K562 (cell line): ENCODE measurements at regions of chrX and their contacts with region 1.

Region 1: GRCh38 chrX:49147936-49148335 is 14.6 kb upstream of the MAGIX start:
- DNase-seq: peak in 2 of 4 experiments; percentile 16 to 41
- ATAC-seq: peak; percentile 55
- H3K4me3 ChIP-seq: peak overlapping the region; percentile 54
- H3K27ac ChIP-seq: peak overlapping the region; percentile 98
- H3K4me1 ChIP-seq: peaks cover 5 to 9% of the 10 kb centered on the region in 2 experiments; a peak in 3 of 5 replicates
- H3K27me3 ChIP-seq: no peaks in the 10 kb centered on the region
- CTCF ChIP-seq: no peak
- EP300 ChIP-seq: no peak
- POLR2A ChIP-seq: no peak
- RAD21 ChIP-seq: no peak

Region 2: DNA sequence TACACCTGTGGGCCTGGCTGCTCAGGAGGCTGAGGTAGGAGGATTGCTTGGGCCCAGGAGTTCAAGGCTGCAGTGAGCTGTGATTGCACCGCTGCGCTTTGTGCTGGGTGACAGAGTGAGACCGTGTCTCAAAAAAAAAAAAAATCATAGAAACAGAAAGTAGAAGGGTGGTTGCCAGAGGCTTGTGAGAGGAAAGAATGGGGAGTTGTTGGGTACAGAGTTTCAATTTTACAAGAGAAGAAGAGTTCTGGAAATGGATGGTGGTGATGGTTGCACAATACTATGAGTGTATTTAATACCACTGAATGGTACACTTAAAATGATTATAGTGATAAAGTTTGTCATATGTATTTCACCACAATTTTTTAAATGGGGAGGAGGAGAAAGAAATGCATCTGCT is 396.6 kb before region 1 on chrX:
- CTCF ChIA-PET with region 1: no interaction called
- POLR2A ChIA-PET with region 1: no interaction called
- in situ Hi-C with region 1: no loop called
- intact Hi-C with region 1: no loop called
- DNase-seq: no peak
- ATAC-seq: no peak
- H3K4me3 ChIP-seq: no peak overlapping the region
- H3K27ac ChIP-seq: no peak overlapping the region
- H3K4me1 ChIP-seq: peaks cover 3 to 8% of the 10 kb centered on the region in 2 experiments; a peak in 3 of 5 replicates
- H3K27me3 ChIP-seq: no peaks in the 10 kb centered on the region
- CTCF ChIP-seq: no peak
- EP300 ChIP-seq: no peak
- POLR2A ChIP-seq: no peak
- RAD21 ChIP-seq: no peak

Region 3: DNA sequence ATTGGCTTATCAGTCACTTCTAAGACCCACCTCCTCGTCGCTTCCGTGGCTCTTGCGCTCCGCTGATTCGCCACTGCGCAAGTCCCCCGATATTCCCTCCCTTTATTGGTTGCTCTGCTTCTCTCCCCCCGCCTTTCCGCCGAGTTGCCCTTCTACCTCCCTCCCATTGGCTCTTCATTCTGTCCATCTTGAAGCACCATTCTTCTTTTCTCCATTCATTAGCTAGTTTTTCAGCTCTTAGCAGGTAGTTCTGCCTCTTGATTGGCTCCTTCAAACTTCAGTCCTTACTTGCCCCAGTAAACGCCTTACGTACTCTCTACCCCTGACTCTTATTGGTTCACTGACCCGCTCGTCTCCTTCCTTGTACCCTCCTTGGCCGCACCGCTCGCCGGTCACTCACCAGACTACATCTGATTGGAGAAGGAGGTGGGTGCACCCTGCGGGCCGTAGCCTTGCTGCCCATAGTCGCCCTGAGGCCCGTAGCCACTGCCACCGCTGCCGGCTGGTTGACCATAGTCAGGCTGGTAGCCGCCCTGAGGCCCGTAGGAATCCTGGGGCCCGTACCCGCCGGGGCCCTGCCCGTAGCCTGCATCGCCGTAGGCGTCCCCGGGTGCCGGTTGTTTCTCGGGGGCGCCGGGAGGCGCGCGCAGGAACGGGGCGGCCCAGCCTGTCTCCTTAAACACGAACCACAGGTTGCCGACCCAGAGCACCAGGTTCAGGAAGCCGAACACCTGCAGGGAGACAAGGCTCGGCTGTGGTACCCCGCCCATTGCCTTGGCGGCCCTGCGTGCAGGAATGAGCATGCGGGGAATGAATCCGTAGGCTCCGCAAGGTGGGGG is 43.3 kb after region 1 on chrX:
- CTCF ChIA-PET with region 1: no interaction called
- POLR2A ChIA-PET with region 1: interaction called, 3 read pairs
- in situ Hi-C with region 1: no loop called
- intact Hi-C with region 1: loop called (anchors 5 kb)
- DNase-seq: peak; percentile 84 to 98 (median 90)
- ATAC-seq: peak; percentile 90
- H3K4me3 ChIP-seq: peak overlapping the region; percentile 89
- H3K27ac ChIP-seq: peak overlapping the region; percentile 78
- H3K4me1 ChIP-seq: peaks cover 38 to 48% of the 10 kb centered on the region in 2 experiments
- H3K27me3 ChIP-seq: no peaks in the 10 kb centered on the region
- CTCF ChIP-seq: no peak; a peak in 1 of 6 replicates
- EP300 ChIP-seq: no peak
- POLR2A ChIP-seq: peak; percentile 80
- RAD21 ChIP-seq: no peak

Region 4: DNA sequence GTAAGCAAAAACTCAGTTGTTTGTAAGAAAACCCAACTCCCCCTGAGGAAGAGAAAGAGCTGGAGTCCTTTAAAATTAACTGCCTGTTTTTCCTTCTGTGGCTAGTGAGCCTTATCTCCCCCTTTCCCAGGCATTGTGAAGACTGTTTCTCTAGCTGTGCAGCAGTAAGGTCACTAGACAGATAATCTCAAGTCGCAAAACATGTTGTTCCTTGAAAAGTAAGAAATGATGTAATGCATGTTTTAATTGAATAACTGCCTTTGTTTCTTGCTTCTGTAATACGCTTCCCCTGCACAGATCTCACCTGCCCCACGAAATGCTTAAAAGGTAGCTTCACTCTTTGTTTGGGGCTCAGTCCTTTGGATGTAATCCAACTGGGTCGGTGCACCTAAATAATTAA is 168.1 kb after region 1 on chrX:
- CTCF ChIA-PET with region 1: no interaction called
- POLR2A ChIA-PET with region 1: no interaction called
- in situ Hi-C with region 1: no loop called
- intact Hi-C with region 1: no loop called
- DNase-seq: peak in 1 of 4 experiments; percentile 51
- ATAC-seq: peak; percentile 40; the same call in 1 of the 3 replicates
- H3K4me3 ChIP-seq: no peak overlapping the region
- H3K27ac ChIP-seq: peak overlapping the region; percentile 49; the same call in 2 of the 3 replicates
- H3K4me1 ChIP-seq: peaks cover 0 to 10% of the 10 kb centered on the region in 2 experiments; a peak in 2 of 5 replicates
- H3K27me3 ChIP-seq: no peaks in the 10 kb centered on the region
- CTCF ChIP-seq: no peak
- EP300 ChIP-seq: no peak
- POLR2A ChIP-seq: no peak
- RAD21 ChIP-seq: no peak